Natural killer cell (primary cell): ENCODE measurements at regions of chr1 and their contacts with region 1.

Region 1: DNA sequence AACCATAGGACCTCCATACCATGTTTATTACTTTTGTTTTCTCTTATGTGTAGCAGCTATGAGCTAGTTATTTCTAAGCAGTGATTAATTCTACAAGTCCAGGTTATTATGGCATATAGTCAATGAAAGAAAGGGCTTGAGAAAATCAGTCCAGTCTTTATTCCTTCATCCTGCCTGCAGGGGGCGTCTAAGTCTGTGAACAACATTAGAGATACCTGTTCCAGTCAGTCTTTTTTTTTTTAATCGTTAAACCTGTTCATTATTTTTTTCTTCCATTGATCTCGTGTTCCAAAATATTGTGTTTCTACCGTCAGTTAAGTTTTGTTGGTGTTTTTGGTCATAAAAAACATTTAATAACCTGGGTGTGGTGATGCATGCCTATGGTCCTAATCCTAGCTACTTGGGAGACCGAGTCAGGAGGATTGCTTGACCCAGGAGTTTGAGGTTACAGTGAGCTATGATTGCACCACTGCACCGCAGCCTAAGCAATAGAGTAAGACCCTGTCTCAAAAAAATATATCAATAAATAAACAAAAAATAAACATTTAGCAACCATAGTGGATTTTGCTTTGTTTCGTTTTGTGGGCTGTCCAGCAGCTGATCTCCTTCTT is 29.4 kb upstream of the CD2 start:
- DNase-seq: peak; percentile 50 to 91
- ATAC-seq: peak in 2 of 3 donors; percentile 64 to 79
- H3K4me3 ChIP-seq: no peak overlapping the region
- H3K4me3 Mint-ChIP-seq: no peak overlapping the region
- H3K27ac ChIP-seq: no peak overlapping the region
- H3K27ac Mint-ChIP-seq: no peak overlapping the region
- H3K4me1 ChIP-seq: no peaks in the 10 kb centered on the region
- H3K4me1 Mint-ChIP-seq: peaks cover 6 to 11% of the 10 kb centered on the region in 2 donors
- H3K27me3 ChIP-seq: no peaks in the 10 kb centered on the region
- H3K27me3 Mint-ChIP-seq: no peaks in the 10 kb centered on the region
- CTCF ChIP-seq: peak; percentile 94

Region 2: GRCh38 chr1:117059678-117060440 is 335.0 kb after region 1 on chr1 and contains the start of gene TTF2:
- intact Hi-C with region 1: loop called (anchors 1 kb)
- DNase-seq: peak; percentile 90 to 98
- ATAC-seq: peak; percentile 92 to 98 (median 94)
- H3K4me3 ChIP-seq: peak within 1 kb of the TSS; percentile 58
- H3K4me3 Mint-ChIP-seq: no peak within 1 kb of the TSS
- H3K27ac ChIP-seq: peak within 1 kb of the TSS; percentile 54
- H3K27ac Mint-ChIP-seq: no peak within 1 kb of the TSS
- H3K4me1 ChIP-seq: peaks cover 16% of the 10 kb centered on the region
- H3K4me1 Mint-ChIP-seq: peaks cover 9 to 16% of the 10 kb centered on the region in 2 donors
- H3K27me3 ChIP-seq: no peaks in the 10 kb centered on the region
- H3K27me3 Mint-ChIP-seq: no peaks in the 10 kb centered on the region
- CTCF ChIP-seq: no peak
- total RNA-seq, gene TTF2: 17.9 to 24.7 (median 23.9) TPM

Region 3: DNA sequence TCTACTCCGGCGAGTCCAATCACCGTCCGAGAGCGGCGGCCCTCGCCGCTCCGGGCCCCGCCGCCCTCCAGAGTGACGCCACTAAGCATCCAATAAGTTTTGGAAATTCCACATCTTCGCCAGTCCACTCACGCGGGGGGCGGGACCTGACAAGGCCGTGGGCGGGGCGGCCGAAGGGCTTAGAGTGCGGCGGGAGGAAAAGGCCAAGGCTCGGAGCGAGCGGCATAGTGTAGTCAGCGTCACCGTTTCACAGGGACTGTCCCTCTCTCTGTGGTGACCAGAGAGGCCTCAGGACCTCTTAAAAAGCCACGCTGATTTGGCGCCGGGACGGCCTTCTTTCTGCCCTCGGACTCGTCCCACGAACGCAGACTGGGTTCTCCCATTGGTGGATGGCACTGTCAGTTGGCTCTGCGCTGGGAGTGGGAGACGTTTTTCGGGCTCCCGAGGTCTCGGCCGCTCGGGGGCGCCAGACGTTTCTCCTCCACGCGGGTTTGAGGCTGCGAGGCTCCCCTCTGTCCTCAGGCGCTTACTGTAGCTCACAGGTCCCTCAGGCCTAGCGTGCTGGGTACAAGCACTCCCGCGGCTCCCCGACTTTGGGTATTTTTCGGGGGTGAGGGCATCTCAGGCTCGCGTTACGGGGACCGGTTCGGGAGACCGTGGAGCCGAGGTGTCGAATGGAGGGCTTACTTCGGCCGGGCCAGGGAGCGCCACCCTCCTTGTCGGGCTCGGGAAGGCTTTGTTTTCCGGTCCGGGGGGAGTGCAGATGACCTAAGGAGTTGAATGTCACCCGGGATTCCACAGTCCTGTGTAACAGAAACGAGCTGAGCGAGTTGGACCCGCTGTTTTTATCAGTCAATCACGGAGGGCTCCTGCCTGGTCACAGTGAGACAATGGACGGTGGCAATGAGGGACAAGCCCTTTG is 397.2 kb after region 1 on chr1:
- intact Hi-C with region 1: loop called (anchors 5 kb)
- DNase-seq: peak; percentile 76 to 89
- ATAC-seq: peak; percentile 82 to 88 (median 86)
- H3K4me3 ChIP-seq: peak overlapping the region; percentile 74
- H3K4me3 Mint-ChIP-seq: peak overlapping the region; percentile 93
- H3K27ac ChIP-seq: no peak overlapping the region
- H3K27ac Mint-ChIP-seq: peak overlapping the region; percentile 39 to 87
- H3K4me1 ChIP-seq: peaks cover 16% of the 10 kb centered on the region
- H3K4me1 Mint-ChIP-seq: peaks cover 5 to 16% of the 10 kb centered on the region in 2 donors
- H3K27me3 ChIP-seq: no peaks in the 10 kb centered on the region
- H3K27me3 Mint-ChIP-seq: peaks cover 0 to 7% of the 10 kb centered on the region in 2 donors
- CTCF ChIP-seq: peak; percentile 65